Psoas muscle (tissue), 8 donors: ENCODE measurements at regions of chr5 and their contacts with region 1.

Region 1: DNA sequence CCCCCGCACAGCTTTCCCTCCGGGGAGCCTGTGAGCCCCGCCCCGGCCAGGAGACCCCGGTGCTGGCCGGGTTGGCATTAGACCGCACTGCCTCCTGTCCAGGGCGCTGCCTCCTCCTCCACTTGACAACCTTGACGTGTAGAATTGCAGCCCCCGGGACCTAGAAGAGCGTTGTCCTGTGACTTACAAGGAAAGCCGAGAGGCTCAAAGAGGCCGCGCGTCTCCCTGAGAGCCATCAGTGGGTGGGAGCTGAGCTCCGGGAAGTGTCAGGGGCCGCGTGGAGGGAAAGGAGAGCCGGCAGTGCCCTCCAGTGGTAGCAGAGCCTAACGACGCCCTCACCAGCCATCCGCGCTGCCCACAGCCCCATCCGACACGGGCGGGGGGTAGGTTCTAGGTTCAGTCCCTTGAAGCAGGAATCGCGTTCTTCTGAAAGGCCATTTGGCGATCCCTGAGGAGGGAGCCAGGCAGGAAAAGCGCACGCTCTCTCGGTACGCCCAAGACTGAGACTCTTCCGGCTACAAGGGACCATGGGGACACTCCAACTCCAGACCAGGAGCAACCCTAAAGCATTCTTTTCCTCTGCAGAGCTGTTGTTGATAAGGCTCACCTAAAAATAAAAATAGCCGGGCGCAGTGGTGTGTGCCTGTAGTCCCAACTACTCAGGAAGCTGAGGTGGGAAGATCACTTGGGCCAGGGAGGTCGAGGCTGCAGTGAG is 40.6 kb upstream of the SAP30L start:
- DNase-seq: peak; percentile 79 to 87
- ATAC-seq: peak; percentile 95 to 100 (median 98)
- H3K4me3 ChIP-seq: peak overlapping the region; percentile 60
- H3K27ac ChIP-seq: no peak overlapping the region
- H3K4me1 ChIP-seq: peaks cover 8% of the 10 kb centered on the region
- H3K27me3 ChIP-seq: no peaks in the 10 kb centered on the region
- CTCF ChIP-seq: peak; percentile 91

Region 2: GRCh38 chr5:153974131-153974812 is 431.0 kb before region 1 on chr5:
- intact Hi-C with region 1: loop called in 1 of 2 experiments (anchors 5 kb)
- DNase-seq: no peak
- ATAC-seq: peak in 1 of 4 donors; percentile 55
- H3K4me3 ChIP-seq: no peak overlapping the region
- H3K27ac ChIP-seq: no peak overlapping the region
- H3K4me1 ChIP-seq: no peaks in the 10 kb centered on the region
- H3K27me3 ChIP-seq: no peaks in the 10 kb centered on the region
- CTCF ChIP-seq: peak; percentile 68

Region 3: DNA sequence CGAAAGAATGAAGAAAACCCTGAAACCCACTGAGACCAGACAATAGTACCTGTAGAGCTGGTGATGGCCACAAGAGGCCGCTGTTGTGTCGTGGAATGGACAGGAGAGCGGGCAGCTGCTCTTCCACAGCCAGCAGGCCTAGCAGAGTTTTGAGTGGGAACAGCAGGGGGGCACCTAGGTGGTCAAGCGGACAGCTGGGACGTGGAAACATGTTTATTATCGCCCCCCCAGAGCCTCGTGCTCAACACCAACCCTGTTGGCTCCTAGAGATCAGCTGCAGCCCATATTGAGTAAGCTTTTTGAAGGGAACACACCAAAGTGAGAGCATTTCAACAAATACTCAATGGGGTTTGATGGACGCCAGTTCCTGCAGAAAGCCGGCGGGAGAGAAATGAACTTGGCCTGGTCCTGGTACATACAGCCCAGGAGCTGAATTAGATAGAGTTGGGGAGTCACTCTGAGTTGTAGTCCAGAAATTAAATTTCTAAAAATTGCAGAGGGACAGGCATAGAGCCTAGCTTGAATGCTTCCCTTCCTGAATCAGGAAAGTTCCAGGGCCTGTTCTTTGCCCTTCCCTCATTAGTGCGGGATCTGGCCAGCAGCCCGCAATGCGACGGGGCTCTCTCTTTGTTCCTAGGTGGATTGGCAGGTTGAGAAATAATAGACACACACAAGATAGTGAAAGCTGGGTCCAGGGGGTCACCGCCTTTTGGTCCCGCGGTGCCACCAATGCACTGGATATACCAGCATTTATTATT is 332.6 kb before region 1 on chr5:
- intact Hi-C with region 1: loop called (anchors 1 to 2 kb)
- DNase-seq: peak; percentile 84 to 89
- ATAC-seq: peak; percentile 89 to 97 (median 92)
- H3K4me3 ChIP-seq: no peak overlapping the region
- H3K27ac ChIP-seq: no peak overlapping the region
- H3K4me1 ChIP-seq: peaks cover 8% of the 10 kb centered on the region
- H3K27me3 ChIP-seq: no peaks in the 10 kb centered on the region
- CTCF ChIP-seq: peak; percentile 96

Region 4: DNA sequence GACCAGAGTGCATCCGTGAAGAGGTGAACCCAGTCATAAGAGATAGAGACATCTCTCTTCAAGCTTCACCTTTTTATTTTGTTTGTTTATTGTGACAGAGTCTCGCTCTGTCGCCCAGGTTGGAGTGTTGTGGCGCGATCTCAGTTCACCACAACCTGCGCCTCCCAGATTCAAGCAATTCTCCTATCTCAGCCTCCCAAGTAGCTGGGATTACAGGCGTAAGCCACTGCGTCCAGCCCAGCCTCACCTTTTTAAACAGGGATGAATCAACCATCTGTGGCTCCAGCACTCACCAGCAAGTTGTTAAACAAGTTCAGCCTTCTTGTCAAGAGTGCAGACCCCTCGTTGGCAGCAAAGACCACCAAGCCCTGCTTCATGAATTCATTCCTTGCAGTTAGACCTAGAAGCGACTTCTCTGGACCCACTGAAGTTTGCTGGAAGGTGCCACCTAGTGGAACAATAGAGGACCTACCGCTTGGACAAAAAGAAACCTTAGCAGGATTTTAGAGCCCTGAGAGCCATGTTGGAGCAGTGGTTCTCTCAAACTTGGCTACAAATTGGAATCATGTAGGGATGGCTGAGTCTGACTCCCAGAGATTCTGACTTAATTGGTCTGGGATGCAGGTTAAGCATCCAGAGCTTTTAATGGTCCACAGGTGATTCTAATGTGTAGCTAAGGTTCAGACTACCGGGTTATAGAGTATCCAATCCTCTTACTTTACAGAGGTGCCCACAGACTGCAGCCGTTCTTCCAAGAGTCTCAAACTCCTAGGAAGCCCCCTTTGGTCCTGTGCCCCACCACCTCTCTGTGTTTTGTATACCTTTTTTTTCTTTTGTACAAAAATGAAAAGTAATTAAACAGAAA is 225.2 kb before region 1 on chr5:
- intact Hi-C with region 1: loop called (anchors 2 to 5 kb)
- DNase-seq: no peak
- ATAC-seq: peak; percentile 62 to 87 (median 78)
- H3K4me3 ChIP-seq: no peak overlapping the region
- H3K27ac ChIP-seq: no peak overlapping the region
- H3K4me1 ChIP-seq: no peaks in the 10 kb centered on the region
- H3K27me3 ChIP-seq: no peaks in the 10 kb centered on the region
- CTCF ChIP-seq: peak; percentile 77

Region 5: GRCh38 chr5:154189819-154190594 is 215.2 kb before region 1 on chr5:
- intact Hi-C with region 1: loop called in 1 of 2 experiments (anchors 5 kb)
- DNase-seq: peak; percentile 90 to 94
- ATAC-seq: peak; percentile 93 to 95 (median 95)
- H3K4me3 ChIP-seq: peak overlapping the region; percentile 86
- H3K27ac ChIP-seq: peak overlapping the region; percentile 78
- H3K4me1 ChIP-seq: peaks cover 29% of the 10 kb centered on the region
- H3K27me3 ChIP-seq: no peaks in the 10 kb centered on the region
- CTCF ChIP-seq: peak; percentile 23